ENCODE measurements at regions of chr7 and their contacts with region 1.

Region 1: DNA sequence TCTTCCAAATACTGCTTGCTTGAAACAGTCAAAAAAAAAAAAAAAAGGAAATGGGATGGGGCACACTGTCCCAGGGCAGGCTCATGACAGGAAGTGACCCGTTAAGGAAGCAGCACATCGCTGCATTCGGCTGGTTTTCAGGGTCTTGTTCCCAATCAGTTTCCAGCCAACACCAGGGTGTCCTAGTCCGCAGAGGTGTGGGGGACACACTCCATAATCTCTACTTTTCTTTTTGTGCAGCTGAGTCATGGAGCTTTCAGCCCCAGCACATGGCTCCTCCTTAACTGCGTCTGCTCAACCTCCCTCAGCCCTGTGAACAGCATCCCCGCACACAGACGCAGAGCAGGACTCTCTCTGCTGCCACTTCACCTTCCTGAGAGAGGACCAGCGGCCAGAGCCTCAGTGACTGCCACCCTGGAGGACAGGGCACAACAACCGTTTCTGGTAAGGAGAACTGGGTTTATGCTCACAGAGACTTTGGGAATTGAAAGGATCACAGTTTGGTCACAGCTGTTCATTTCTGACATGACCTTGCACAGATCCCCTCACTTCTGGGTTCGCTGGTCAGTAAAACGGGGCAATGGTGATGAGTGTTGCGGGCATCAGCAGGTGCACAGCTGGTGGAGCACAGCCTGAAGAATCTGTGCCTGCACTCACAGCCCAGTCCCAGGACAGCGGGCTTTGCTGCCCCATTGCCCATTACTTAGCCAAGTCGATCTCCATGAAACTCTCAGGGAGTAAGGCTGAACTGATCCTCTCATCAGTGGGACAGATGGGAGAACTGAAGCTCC is at the start of gene GIMAP5:
- DNase-seq: peak; percentile 67
- ATAC-seq: peak; percentile 77
- H3K4me3 Mint-ChIP-seq: peak within 1 kb of the TSS; percentile 98
- H3K27ac Mint-ChIP-seq: peak within 1 kb of the TSS; percentile 98
- H3K4me1 Mint-ChIP-seq: peaks cover 72% of the 10 kb centered on the region
- H3K27me3 Mint-ChIP-seq: no peaks in the 10 kb centered on the region
- total RNA-seq, gene GIMAP5: 112 to 123 TPM

Region 2: DNA sequence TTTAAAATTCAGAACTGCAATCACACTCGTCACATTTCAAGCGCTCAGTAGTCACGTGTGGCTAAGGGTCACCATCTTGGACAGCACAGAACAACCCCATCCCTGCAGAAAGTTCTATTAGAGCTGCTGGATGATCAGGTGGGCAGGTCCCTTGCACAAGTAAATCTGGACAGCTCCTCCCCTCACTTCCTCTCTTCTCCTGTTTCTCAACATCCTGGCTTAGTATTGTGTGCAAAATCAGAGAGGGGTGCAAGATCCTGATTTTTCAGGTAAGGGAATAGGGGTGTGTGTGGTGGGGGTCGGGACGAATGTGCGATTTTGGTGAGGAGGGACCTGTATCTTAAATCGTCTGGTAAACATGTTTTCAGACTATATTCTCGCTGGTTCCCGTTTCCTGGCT is 170.3 kb before region 1 on chr7 and contains the start of gene GIMAP4:
- POLR2A ChIA-PET with region 1: interaction called, 14 read pairs
- DNase-seq: no peak
- ATAC-seq: peak; percentile 63
- H3K4me3 Mint-ChIP-seq: peak within 1 kb of the TSS; percentile 94
- H3K27ac Mint-ChIP-seq: peak within 1 kb of the TSS; percentile 96
- H3K4me1 Mint-ChIP-seq: peaks cover 55% of the 10 kb centered on the region
- H3K27me3 Mint-ChIP-seq: no peaks in the 10 kb centered on the region
- total RNA-seq, gene GIMAP4: 285 to 288 TPM

Region 3: GRCh38 chr7:150668472-150668911 is 69.0 kb before region 1 on chr7:
- POLR2A ChIA-PET with region 1: interaction called, 16 read pairs
- DNase-seq: peak; percentile 48
- ATAC-seq: peak; percentile 75
- H3K4me3 Mint-ChIP-seq: peak overlapping the region; percentile 75
- H3K27ac Mint-ChIP-seq: peak overlapping the region; percentile 89
- H3K4me1 Mint-ChIP-seq: peaks cover 70% of the 10 kb centered on the region
- H3K27me3 Mint-ChIP-seq: no peaks in the 10 kb centered on the region

Region 4: DNA sequence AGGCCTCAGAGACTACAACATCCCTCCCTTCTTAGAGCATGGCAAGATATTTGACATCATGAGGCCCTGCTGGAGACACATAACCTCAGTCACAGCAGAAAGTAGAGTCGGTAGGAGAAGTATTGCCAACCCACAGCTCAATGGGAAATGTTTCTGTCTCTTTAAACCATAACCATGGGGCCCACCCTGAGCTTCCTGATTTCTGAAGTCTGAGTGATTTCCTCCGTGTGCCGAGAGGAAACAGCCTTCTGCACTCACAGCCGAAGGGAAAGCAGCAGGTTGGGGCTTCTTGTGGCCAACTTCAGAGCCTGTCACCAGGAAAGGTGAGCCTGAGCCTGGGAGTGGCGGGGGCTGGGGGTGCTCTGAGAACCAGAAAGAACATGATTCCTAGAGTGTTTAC is 21.1 kb before region 1 on chr7 and contains the start of gene GIMAP1:
- POLR2A ChIA-PET with region 1: interaction called, 37 read pairs
- DNase-seq: no peak
- ATAC-seq: peak; percentile 76
- H3K4me3 Mint-ChIP-seq: peak within 1 kb of the TSS; percentile 84
- H3K27ac Mint-ChIP-seq: peak within 1 kb of the TSS; percentile 87
- H3K4me1 Mint-ChIP-seq: peaks cover 43% of the 10 kb centered on the region
- H3K27me3 Mint-ChIP-seq: no peaks in the 10 kb centered on the region
- total RNA-seq, gene GIMAP1: 42.1 to 43.0 TPM

Region 5: GRCh38 chr7:150753826-150754603 is 16.6 kb after region 1 on chr7:
- POLR2A ChIA-PET with region 1: interaction called, 38 read pairs
- DNase-seq: no peak
- ATAC-seq: peak; percentile 23
- H3K4me3 Mint-ChIP-seq: peak overlapping the region; percentile 55
- H3K27ac Mint-ChIP-seq: peak overlapping the region; percentile 92
- H3K4me1 Mint-ChIP-seq: peaks cover 55% of the 10 kb centered on the region
- H3K27me3 Mint-ChIP-seq: peaks cover 2% of the 10 kb centered on the region